Lower lobe of right lung (tissue), 2 donors: ENCODE measurements at regions of chrX and their contacts with region 1.

Region 1: GRCh38 chrX:107654872-107655761 is 26.8 kb downstream of the PRPS1 start:
- DNase-seq: peak; percentile 71
- ATAC-seq: peak; percentile 94 to 96
- H3K4me3 ChIP-seq: peak overlapping the region; percentile 19
- H3K27ac ChIP-seq: peak overlapping the region; percentile 64
- H3K4me1 ChIP-seq: peaks cover 11% of the 10 kb centered on the region
- H3K27me3 ChIP-seq: no peaks in the 10 kb centered on the region
- CTCF ChIP-seq: peak; percentile 68

Region 2: GRCh38 chrX:107589243-107589642 is 65.9 kb before region 1 on chrX:
- intact Hi-C with region 1: no loop called
- DNase-seq: no peak
- ATAC-seq: no peak
- H3K4me3 ChIP-seq: no peak overlapping the region
- H3K27ac ChIP-seq: no peak overlapping the region
- H3K4me1 ChIP-seq: no peaks in the 10 kb centered on the region
- H3K27me3 ChIP-seq: no peaks in the 10 kb centered on the region
- CTCF ChIP-seq: no peak

Region 3: DNA sequence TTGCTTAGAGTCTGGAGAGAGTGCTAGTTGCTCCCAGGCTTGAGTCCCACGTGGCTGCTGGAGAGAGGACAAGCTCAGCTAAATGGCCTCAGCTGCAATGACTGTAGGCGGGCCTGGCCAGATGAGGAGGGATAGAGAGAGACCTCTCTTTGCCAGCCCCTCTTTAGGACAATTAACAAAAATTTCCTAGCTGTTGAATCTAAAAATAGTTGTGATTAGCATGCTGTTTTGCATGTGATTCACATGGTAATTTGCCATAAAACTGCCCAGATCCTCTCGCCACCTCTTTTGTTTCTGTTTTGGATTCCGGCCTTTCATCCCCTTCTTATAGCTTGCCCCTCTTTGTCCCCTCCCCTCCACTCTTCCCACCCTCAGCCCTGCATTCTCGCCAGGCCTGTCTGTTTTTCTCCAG is 55.7 kb before region 1 on chrX:
- intact Hi-C with region 1: no loop called
- DNase-seq: no peak
- ATAC-seq: no peak
- H3K4me3 ChIP-seq: no peak overlapping the region
- H3K27ac ChIP-seq: no peak overlapping the region
- H3K4me1 ChIP-seq: no peaks in the 10 kb centered on the region
- H3K27me3 ChIP-seq: no peaks in the 10 kb centered on the region
- CTCF ChIP-seq: no peak

Region 4: GRCh38 chrX:107776649-107777535 is 121.8 kb after region 1 on chrX:
- intact Hi-C with region 1: loop called (anchors 10 kb)
- DNase-seq: peak; percentile 84
- ATAC-seq: peak; percentile 79 to 87
- H3K4me3 ChIP-seq: peak overlapping the region; percentile 62
- H3K27ac ChIP-seq: peak overlapping the region; percentile 83
- H3K4me1 ChIP-seq: peaks cover 5% of the 10 kb centered on the region
- H3K27me3 ChIP-seq: no peaks in the 10 kb centered on the region
- CTCF ChIP-seq: peak; percentile 68